ENCODE measurements at regions of chr3 and their contacts with region 1.

Region 1: GRCh38 chr3:125055913-125056745 is at the start of gene HEG1:
- DNase-seq: peak; percentile 81 to 96
- H3K4me3 ChIP-seq: peak within 1 kb of the TSS; percentile 72 to 93
- H3K27ac ChIP-seq: peak within 1 kb of the TSS; percentile 95 to 98
- H3K4me1 ChIP-seq: peaks cover 21 to 49% of the 10 kb centered on the region in 2 donors
- H3K27me3 ChIP-seq: no peaks in the 10 kb centered on the region
- CTCF ChIP-seq: no peak
- total RNA-seq, gene HEG1: 153 TPM

Region 2: DNA sequence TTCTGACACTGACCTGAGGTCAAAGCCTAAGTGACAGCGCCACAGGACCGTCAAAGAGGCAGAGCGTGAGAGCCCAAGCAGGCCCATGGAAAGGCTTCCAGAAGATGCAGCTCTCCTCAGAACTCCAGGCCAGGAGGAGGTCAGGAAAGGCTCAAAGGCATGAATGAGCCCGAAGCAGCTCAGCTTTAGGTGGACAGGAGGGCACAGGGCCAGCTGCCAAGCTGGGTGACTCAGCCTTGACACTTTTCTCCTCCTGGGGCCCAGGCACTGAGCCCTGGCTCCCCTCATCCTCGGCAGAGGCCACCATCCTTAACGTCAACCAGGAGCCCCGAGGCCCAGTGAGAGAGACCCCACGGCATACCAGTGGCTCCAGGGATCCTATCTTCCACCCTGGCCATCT is 1670.1 kb before region 1 on chr3:
- intact Hi-C with region 1: loop called (anchors 10 kb)
- DNase-seq: peak in 1 of 2 donors; percentile 79
- H3K4me3 ChIP-seq: peak overlapping the region in 1 of 2 donors; percentile 12
- H3K27ac ChIP-seq: peak overlapping the region; percentile 90 to 93
- H3K4me1 ChIP-seq: peaks cover 16 to 65% of the 10 kb centered on the region in 2 donors
- H3K27me3 ChIP-seq: no peaks in the 10 kb centered on the region
- CTCF ChIP-seq: no peak

Region 3: GRCh38 chr3:124786441-124787241 is 269.5 kb before region 1 on chr3:
- intact Hi-C with region 1: loop called (anchors 10 kb)
- DNase-seq: no peak
- H3K4me3 ChIP-seq: peak overlapping the region in 1 of 2 donors; percentile 11
- H3K27ac ChIP-seq: peak overlapping the region; percentile 53 to 90
- H3K4me1 ChIP-seq: peaks cover 19 to 67% of the 10 kb centered on the region in 2 donors
- H3K27me3 ChIP-seq: no peaks in the 10 kb centered on the region
- CTCF ChIP-seq: peak; percentile 32 to 54 (median 40)

Region 4: GRCh38 chr3:125042725-125043406 is 13.3 kb before region 1 on chr3:
- intact Hi-C with region 1: loop called (anchors 1 kb)
- DNase-seq: peak in 1 of 2 donors; percentile 86
- H3K4me3 ChIP-seq: peak overlapping the region; percentile 37 to 52
- H3K27ac ChIP-seq: peak overlapping the region; percentile 94 to 95
- H3K4me1 ChIP-seq: peaks cover 25 to 68% of the 10 kb centered on the region in 2 donors
- H3K27me3 ChIP-seq: no peaks in the 10 kb centered on the region
- CTCF ChIP-seq: no peak

Region 5: GRCh38 chr3:125141596-125142419 is 85.7 kb after region 1 on chr3:
- intact Hi-C with region 1: loop called (anchors 2 kb)
- DNase-seq: no peak
- H3K4me3 ChIP-seq: peak overlapping the region; percentile 20 to 65
- H3K27ac ChIP-seq: peak overlapping the region; percentile 64 to 78
- H3K4me1 ChIP-seq: peaks cover 17 to 33% of the 10 kb centered on the region in 2 donors
- H3K27me3 ChIP-seq: no peaks in the 10 kb centered on the region
- CTCF ChIP-seq: peak; percentile 23 to 54 (median 32)

Region 6: GRCh38 chr3:125175295-125176078 is 119.4 kb after region 1 on chr3:
- intact Hi-C with region 1: no loop called
- DNase-seq: no peak
- H3K4me3 ChIP-seq: no peak overlapping the region
- H3K27ac ChIP-seq: no peak overlapping the region
- H3K4me1 ChIP-seq: no peaks in the 10 kb centered on the region
- H3K27me3 ChIP-seq: no peaks in the 10 kb centered on the region
- CTCF ChIP-seq: no peak

Region 7: GRCh38 chr3:125594581-125595011 is 538.5 kb after region 1 on chr3:
- intact Hi-C with region 1: loop called (anchors 5 kb)
- DNase-seq: no peak
- H3K4me3 ChIP-seq: peak overlapping the region; percentile 76 to 80
- H3K27ac ChIP-seq: peak overlapping the region; percentile 93 to 94
- H3K4me1 ChIP-seq: peaks cover 8 to 29% of the 10 kb centered on the region in 2 donors
- H3K27me3 ChIP-seq: no peaks in the 10 kb centered on the region
- CTCF ChIP-seq: no peak

Measured in ascending aorta (tissue), 2 donors.